Dorsolateral prefrontal cortex (tissue), 120 donors: ENCODE measurements at regions of chr10 and their contacts with region 1.

Region 1: DNA sequence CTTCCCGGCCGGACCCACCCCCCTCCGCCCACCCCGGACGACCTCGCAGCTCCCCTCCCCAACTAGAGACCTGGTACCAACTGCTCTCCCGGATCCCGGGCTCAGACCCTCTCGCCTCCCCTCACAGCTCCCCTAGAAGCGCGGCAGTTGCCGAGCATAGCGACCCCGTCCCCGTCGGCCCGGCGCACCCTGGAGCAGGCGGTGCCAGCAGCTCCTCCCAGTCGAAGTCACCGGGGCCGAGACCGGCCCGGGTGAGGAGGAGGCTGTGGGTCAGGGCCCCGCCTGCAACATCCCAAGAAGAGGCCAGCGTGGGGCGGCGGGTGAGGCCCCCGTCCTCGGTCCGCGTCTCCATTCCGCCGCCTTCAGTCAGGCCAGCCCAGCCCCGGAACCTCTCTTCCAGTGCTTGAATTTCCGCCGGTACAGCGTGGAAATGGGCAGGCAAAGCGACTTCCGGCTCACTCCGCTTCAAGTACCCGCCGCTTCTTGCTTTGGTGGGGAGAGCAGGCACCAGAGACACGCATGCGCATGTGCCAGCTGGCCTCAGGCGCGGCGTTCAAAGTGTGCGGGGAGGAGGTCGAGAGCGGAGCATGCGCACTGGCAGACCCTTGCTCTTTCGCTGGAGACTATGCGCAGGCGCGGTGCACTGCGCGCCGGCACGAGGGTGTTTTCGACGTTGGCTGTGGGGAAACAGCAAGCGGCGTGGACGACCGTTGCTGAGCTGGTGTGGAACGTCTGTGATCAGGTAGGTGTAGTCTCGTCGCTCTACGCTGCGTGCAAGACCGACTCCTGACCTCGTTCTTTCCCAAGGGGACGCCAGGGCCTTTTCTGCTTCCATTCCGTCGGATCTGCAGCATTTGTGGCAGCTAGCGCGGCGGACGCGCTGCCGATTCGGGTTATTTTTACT is at the start of gene C10orf88:
- DNase-seq: peak; percentile 91 to 97 (median 96)
- H3K4me3 ChIP-seq: peak within 1 kb of the TSS; percentile 66 to 100 (median 91)
- H3K27ac ChIP-seq: peak within 1 kb of the TSS in 53 of 59 donors; percentile 17 to 93 (median 74)
- H3K27me3 ChIP-seq: no peaks in the 10 kb centered on the region
- CTCF ChIP-seq: peak in 36 of 56 donors; percentile 5 to 58 (median 34)
- total RNA-seq, gene C10orf88: 7.8 to 22.4 (median 15.1) TPM

Region 2: GRCh38 chr10:122404576-122404975 is 549.5 kb before region 1 on chr10:
- intact Hi-C with region 1: loop called in 1 of 2 experiments (anchors 5 kb)
- DNase-seq: no peak
- H3K4me3 ChIP-seq: no peak overlapping the region
- H3K27ac ChIP-seq: peak overlapping the region in 16 of 59 donors; percentile 2 to 57 (median 38)
- H3K27me3 ChIP-seq: no peaks in the 10 kb centered on the region
- CTCF ChIP-seq: no peak

Region 3: GRCh38 chr10:122571892-122572291 is 382.2 kb before region 1 on chr10:
- intact Hi-C with region 1: no loop called
- DNase-seq: peak in 6 of 10 donors; percentile 21 to 71 (median 56)
- H3K4me3 ChIP-seq: no peak overlapping the region
- H3K27ac ChIP-seq: peak overlapping the region in 22 of 59 donors; percentile 22 to 81 (median 65)
- H3K27me3 ChIP-seq: no peaks in the 10 kb centered on the region
- CTCF ChIP-seq: no peak

Region 4: GRCh38 chr10:122879339-122880273 is 74.5 kb before region 1 on chr10 and contains the start of gene FAM24B:
- intact Hi-C with region 1: loop called (anchors 5 to 10 kb)
- DNase-seq: peak; percentile 77 to 93 (median 90)
- H3K4me3 ChIP-seq: peak within 1 kb of the TSS; percentile 55 to 90 (median 76)
- H3K27ac ChIP-seq: peak within 1 kb of the TSS in 14 of 59 donors; percentile 33 to 73 (median 56)
- H3K27me3 ChIP-seq: no peaks in the 10 kb centered on the region
- CTCF ChIP-seq: peak in 27 of 56 donors; percentile 4 to 46 (median 26)
- total RNA-seq, gene FAM24B: 1.5 to 9.2 (median 4.9) TPM

Region 5: DNA sequence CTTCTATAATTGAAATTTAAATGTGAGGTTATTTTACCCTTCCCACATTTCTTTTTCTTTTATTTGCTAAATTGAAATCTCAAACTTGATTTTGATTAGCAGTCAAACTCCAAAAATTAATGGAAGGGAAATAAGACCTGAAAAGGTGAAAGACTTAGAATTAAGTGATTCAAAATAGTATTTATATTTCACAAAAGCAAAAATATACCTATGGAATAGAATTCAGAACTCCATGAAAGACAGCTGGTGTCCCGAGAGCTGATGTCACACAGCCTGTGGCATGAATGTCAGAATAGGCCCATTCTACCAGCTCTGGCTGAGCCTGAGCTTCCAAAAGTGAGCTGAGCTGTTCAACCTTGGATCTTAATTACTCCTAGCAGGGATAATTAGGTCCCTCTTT is 43.8 kb before region 1 on chr10 and contains the start of gene FAM24A:
- intact Hi-C with region 1: no loop called
- DNase-seq: no peak
- H3K4me3 ChIP-seq: no peak within 1 kb of the TSS
- H3K27ac ChIP-seq: no peak within 1 kb of the TSS
- H3K27me3 ChIP-seq: no peaks in the 10 kb centered on the region
- CTCF ChIP-seq: no peak
- total RNA-seq, gene FAM24A: not detected

Region 6: GRCh38 chr10:122931088-122931958 is 22.8 kb before region 1 on chr10:
- intact Hi-C with region 1: no loop called
- DNase-seq: no peak
- H3K4me3 ChIP-seq: no peak overlapping the region
- H3K27ac ChIP-seq: no peak overlapping the region
- H3K27me3 ChIP-seq: no peaks in the 10 kb centered on the region
- CTCF ChIP-seq: no peak

Region 7: GRCh38 chr10:122980209-122981065 is 26.4 kb after region 1 on chr10 and contains the start of gene PSTK:
- intact Hi-C with region 1: loop called (anchors 1 to 2 kb)
- DNase-seq: peak; percentile 77 to 93 (median 88)
- H3K4me3 ChIP-seq: peak within 1 kb of the TSS; percentile 57 to 98 (median 83)
- H3K27ac ChIP-seq: peak within 1 kb of the TSS; percentile 76 to 100 (median 98)
- H3K27me3 ChIP-seq: no peaks in the 10 kb centered on the region
- CTCF ChIP-seq: peak; percentile 66 to 98 (median 91)
- total RNA-seq, gene PSTK: 9.6 to 22.9 (median 14.7) TPM

Region 8: GRCh38 chr10:123008439-123009205 is 54.5 kb after region 1 on chr10 and contains the starts of genes ACADSB and IKZF5:
- intact Hi-C with region 1: loop called in 1 of 2 experiments (anchors 2 kb)
- DNase-seq: peak; percentile 86 to 96 (median 94)
- H3K4me3 ChIP-seq: peak within 1 kb of the TSS; percentile 70 to 100 (median 98)
- H3K27ac ChIP-seq: peak within 1 kb of the TSS; percentile 44 to 98 (median 91)
- H3K27me3 ChIP-seq: no peaks in the 10 kb centered on the region
- CTCF ChIP-seq: peak in 23 of 56 donors; percentile 10 to 48 (median 24)
- total RNA-seq, gene ACADSB: 16.7 to 59.4 (median 42.6) TPM
- total RNA-seq, gene IKZF5: 18.6 to 44.3 (median 28.3) TPM

Region 9: DNA sequence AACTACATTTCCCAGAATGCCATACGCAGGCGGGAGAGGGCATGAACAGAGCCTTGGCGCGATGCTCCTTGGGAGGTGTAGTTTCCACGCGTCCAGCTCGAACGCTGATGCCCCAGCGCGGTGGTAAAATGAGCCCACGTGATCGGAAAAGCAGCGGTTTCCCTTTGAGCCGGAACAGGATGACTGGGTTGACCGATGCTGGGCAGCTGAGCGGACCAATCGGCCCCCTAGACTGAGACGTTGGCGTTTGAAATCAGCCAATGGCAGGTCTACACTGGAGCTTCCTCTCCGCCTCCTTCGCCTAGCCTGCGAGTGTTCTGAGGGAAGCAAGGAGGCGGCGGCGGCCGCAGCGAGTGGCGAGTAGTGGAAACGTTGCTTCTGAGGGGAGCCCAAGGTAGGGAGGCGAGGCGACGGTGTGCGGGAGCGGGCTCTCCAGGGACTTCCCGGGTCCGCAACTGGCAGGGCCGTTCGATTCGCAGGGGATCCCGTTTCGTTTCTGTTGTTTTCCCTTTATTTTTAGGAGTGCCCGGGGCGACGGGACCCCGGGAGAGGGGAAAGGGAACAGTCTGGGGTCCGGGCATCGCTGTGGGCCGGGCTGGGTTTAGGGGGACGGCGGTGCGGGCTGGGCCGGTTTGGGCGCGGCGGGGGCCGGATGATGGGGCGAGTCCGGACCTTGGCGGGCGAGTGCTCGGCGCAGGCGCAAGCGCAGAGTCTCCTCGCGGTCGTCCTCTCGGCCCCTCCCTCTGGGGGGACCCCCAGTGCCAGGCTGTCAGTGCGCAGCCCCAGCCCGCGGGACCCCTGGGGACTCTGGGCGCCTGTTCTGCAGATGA is 200.2 kb after region 1 on chr10 and contains the start of gene BUB3:
- intact Hi-C with region 1: loop called in 1 of 2 experiments (anchors 10 kb)
- DNase-seq: peak; percentile 98 to 100 (median 100)
- H3K4me3 ChIP-seq: peak within 1 kb of the TSS; percentile 68 to 100 (median 93)
- H3K27ac ChIP-seq: peak within 1 kb of the TSS in 54 of 59 donors; percentile 25 to 93 (median 82)
- H3K27me3 ChIP-seq: peaks cover 17 to 42% (median 37%) of the 10 kb centered on the region in 45 donors
- CTCF ChIP-seq: peak in 40 of 56 donors; percentile 10 to 59 (median 42)
- total RNA-seq, gene BUB3: 42.8 to 88.8 (median 64.1) TPM

Region 10: GRCh38 chr10:123348691-123349572 is 394.9 kb after region 1 on chr10:
- intact Hi-C with region 1: no loop called
- DNase-seq: no peak
- H3K4me3 ChIP-seq: no peak overlapping the region
- H3K27ac ChIP-seq: no peak overlapping the region
- H3K27me3 ChIP-seq: peaks cover 0 to 5% (median 0%) of the 10 kb centered on the region in 45 donors
- CTCF ChIP-seq: no peak